Mammary epithelial cell (primary cell): ENCODE measurements at regions of chr2 and their contacts with region 1.

Region 1: DNA sequence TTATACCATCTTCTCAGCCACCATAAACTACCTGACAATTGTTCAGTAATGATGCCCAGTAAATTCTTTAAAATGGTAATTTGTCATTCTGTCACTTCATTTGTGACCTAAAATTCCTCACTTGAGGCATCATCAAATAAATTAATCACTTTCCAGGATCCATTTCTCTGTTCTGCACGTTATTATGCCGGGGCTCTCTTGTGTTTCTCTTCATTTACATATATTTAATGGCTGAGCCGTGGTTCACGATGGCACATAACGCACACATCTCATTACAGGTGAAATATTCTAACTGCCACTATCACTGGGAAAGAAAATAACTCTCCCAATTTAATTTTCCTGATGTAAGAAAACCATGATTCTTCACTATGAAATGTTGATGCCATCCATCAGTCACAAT is 529.6 kb downstream of the NR4A2 start:
- DNase-seq: no peak
- H3K4me3 ChIP-seq: no peak overlapping the region
- H3K27ac ChIP-seq: no peak overlapping the region
- H3K4me1 ChIP-seq: no peaks in the 10 kb centered on the region
- H3K27me3 ChIP-seq: no peaks in the 10 kb centered on the region
- CTCF ChIP-seq: no peak

Region 2: GRCh38 chr2:155904720-155905119 is 101.8 kb after region 1 on chr2:
- CTCF ChIA-PET with region 1: no interaction called
- dilution Hi-C with region 1: loop called (anchors 5 kb)
- in situ Hi-C with region 1: no loop called
- intact Hi-C with region 1: no loop called
- DNase-seq: no peak
- H3K4me3 ChIP-seq: no peak overlapping the region
- H3K27ac ChIP-seq: no peak overlapping the region
- H3K4me1 ChIP-seq: no peaks in the 10 kb centered on the region
- H3K27me3 ChIP-seq: no peaks in the 10 kb centered on the region
- CTCF ChIP-seq: no peak